Common myeloid progenitor, CD34-positive (primary cell): ENCODE measurements at regions of chr7 and their contacts with region 1.

Region 1: DNA sequence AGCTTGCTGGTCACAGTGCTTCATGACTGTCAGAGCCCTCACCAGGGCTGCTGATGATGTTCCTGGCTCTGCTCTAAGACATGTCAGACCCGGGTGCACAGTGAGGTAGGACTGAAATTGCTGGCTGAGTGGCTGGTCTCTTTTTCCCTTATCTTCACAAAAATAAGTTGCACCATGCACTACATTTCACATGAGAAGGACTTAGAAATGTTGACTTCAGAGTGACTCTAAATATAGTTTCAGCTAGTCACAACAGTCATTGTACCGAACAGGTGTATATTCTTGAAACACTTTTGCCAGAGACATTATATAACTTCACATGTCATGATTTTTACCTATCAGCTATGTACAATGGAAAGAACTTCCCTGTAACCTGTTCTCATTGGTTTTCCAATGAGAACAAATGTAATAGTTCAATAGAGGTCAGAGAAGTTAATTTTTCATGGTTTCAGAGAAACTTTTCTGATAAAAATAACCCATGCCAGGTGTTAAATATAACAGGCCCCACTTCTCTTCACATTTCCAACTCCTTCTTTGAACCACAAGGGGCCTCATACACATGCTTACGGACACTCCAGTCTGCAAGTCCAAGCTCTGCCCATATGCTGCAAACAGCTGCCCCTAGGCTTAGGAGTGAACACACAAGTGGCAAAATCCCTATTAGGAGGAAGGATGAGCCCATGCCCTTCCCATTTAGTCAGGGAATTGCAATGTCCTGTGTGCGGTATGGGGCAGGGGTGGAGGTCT is 115.6 kb downstream of the CDK6 start:
- DNase-seq: peak in 1 of 3 donors; percentile 49
- H3K4me3 ChIP-seq: no peak overlapping the region
- H3K27ac ChIP-seq: peak overlapping the region in 1 of 2 experiments; percentile 83
- H3K4me1 ChIP-seq: peaks cover 18 to 79% (median 36%) of the 10 kb centered on the region in 4 experiments
- H3K27me3 ChIP-seq: no peaks in the 10 kb centered on the region

Region 2: GRCh38 chr7:92735707-92736106 is 14.9 kb after region 1 on chr7:
- CTCF ChIA-PET with region 1: interaction called, 15 read pairs
- POLR2A ChIA-PET with region 1: no interaction called
- DNase-seq: no peak
- H3K4me3 ChIP-seq: no peak overlapping the region
- H3K27ac ChIP-seq: no peak overlapping the region
- H3K4me1 ChIP-seq: peaks cover 0 to 48% (median 35%) of the 10 kb centered on the region in 4 experiments
- H3K27me3 ChIP-seq: no peaks in the 10 kb centered on the region

Region 3: DNA sequence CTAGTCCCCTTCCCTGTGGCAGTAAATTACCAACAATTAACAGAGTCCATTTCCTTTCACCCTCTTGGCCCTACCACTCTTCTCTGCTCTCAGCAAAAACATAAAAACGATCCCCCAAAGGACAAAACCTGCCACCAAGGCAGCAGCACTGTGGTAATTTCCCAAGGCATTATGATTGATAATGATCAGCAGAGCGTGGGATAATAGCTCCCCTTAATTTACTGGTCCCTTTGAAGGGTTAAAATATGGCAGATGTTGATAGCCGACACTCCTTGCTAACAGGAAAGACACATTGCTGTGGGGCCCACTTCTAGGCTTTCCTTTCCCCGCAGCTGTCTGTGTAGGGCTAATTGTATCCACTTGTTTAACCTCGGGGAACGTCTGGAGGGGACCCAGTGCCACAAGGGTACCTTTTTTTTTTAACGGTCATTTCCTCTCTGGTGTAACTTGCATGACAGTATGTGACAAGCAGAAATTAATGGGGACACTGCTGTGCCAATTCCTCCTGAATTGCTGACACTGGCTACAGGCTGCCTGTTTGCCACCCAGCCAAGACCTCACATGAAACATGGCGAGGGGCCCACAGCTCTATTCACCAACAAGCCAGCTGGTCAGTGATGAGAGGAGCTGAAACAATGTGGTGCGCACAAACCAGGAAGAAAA is 34.3 kb after region 1 on chr7:
- CTCF ChIA-PET with region 1: interaction called, 14 read pairs
- POLR2A ChIA-PET with region 1: interaction called, 8 read pairs
- DNase-seq: peak; percentile 88 to 99 (median 98)
- H3K4me3 ChIP-seq: peak overlapping the region in 6 of 7 experiments; percentile 17 to 52 (median 26)
- H3K27ac ChIP-seq: peak overlapping the region; percentile 93 to 97
- H3K4me1 ChIP-seq: peaks cover 39 to 86% (median 58%) of the 10 kb centered on the region in 4 experiments
- H3K27me3 ChIP-seq: no peaks in the 10 kb centered on the region